ENCODE measurements at regions of chr2 and their contacts with region 1.

Region 1: DNA sequence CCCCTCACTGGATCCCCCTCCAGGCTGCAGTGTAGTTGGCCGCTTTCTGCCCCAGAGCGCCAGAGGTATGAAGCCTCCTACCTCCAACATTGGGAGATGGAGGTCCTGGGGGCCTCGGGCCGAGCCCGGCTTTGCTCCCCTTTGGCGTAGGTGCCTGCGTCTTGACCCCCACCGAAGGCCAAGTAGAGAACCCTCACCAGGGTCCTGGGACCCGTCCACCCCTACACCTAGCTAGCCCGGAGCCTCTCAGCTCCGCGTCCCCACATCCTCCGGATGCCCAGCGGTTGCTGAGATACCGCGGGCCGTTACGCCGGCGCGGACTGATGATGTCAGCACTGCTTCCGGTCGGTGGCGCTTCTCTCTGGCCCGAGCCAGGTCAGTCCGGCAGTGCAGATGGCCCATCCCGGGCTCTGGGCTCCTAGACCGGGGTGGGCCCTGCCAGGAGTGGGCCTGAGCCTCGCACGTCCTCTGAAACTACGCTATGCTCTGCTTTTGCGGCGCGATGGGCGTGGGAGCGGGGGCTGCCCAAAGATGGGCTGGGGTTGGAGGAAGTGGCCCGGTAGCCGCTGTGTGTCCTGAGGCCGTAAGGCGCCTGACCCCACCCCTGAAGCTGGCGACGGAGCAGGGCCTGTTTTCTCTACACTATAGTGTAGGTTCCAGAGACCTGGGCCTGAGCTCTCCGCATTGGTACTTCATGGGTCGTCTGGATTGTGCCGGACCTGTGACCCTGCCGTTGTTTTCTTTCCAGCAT is at the starts of genes GLB1L and STK16:
- DNase-seq: peak; percentile 85
- H3K4me3 ChIP-seq: peak within 1 kb of the TSS; percentile 67 to 98 (median 82)
- H3K27ac ChIP-seq: peak within 1 kb of the TSS; percentile 88
- H3K4me1 ChIP-seq: peaks cover 46% of the 10 kb centered on the region
- H3K27me3 ChIP-seq: no peaks in the 10 kb centered on the region
- CTCF ChIP-seq: no peak
- total RNA-seq, gene GLB1L: 5.5 to 21.8 TPM
- total RNA-seq, gene STK16: 26.9 to 29.8 TPM

Region 2: GRCh38 chr2:219125225-219125885 is 120.0 kb before region 1 on chr2:
- CTCF ChIA-PET with region 1: no interaction called
- dilution Hi-C with region 1: no loop called
- in situ Hi-C with region 1: no loop called
- intact Hi-C with region 1: no loop called
- DNase-seq: peak; percentile 90
- H3K4me3 ChIP-seq: no peak overlapping the region
- H3K27ac ChIP-seq: no peak overlapping the region
- H3K4me1 ChIP-seq: peaks cover 42% of the 10 kb centered on the region
- H3K27me3 ChIP-seq: no peaks in the 10 kb centered on the region
- CTCF ChIP-seq: no peak

Region 3: GRCh38 chr2:219218732-219219701 is 26.3 kb before region 1 on chr2 and contains the start of gene ABCB6:
- CTCF ChIA-PET with region 1: no interaction called
- dilution Hi-C with region 1: no loop called
- in situ Hi-C with region 1: no loop called
- intact Hi-C with region 1: loop called (anchors 1 kb)
- DNase-seq: peak; percentile 57
- H3K4me3 ChIP-seq: peak within 1 kb of the TSS; percentile 12 to 54 (median 48)
- H3K27ac ChIP-seq: peak within 1 kb of the TSS; percentile 18
- H3K4me1 ChIP-seq: peaks cover 21% of the 10 kb centered on the region
- H3K27me3 ChIP-seq: no peaks in the 10 kb centered on the region
- CTCF ChIP-seq: no peak
- total RNA-seq, gene ABCB6: 9.6 to 15.7 TPM

Region 4: DNA sequence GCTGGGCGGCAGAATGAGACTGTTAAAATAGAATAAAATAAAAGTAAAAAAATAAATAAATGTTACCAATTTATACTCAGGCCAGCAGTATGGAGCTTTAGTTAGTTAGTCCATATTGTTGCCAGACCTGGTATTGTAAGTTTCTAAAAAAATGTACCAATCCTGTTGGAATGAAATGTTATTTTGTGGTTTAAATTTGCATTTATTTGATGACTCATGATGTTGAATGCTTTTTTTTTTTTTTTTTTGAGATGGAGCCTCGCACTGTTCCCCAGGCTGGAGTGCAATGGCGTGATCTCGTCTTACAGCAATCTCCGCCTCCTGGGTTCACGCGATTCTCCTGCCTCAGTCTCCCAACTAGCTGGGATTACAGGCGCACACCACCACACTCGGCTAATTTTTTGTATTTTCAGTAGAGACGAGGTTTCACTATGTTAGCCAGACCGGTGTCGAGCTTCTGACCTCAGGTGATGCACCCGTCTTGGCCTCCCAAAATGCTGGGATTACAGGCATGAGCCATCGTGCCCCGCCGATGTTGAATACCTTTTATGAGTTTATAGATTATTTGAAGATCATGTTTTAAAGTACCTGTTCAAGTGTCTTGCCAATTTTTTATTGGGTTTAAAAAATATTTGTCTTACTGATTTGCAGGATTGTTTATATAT is 69.6 kb after region 1 on chr2:
- CTCF ChIA-PET with region 1: no interaction called
- dilution Hi-C with region 1: no loop called
- in situ Hi-C with region 1: no loop called
- intact Hi-C with region 1: no loop called
- DNase-seq: no peak
- H3K4me3 ChIP-seq: no peak overlapping the region
- H3K27ac ChIP-seq: no peak overlapping the region
- H3K4me1 ChIP-seq: no peaks in the 10 kb centered on the region
- H3K27me3 ChIP-seq: no peaks in the 10 kb centered on the region
- CTCF ChIP-seq: no peak

Region 5: DNA sequence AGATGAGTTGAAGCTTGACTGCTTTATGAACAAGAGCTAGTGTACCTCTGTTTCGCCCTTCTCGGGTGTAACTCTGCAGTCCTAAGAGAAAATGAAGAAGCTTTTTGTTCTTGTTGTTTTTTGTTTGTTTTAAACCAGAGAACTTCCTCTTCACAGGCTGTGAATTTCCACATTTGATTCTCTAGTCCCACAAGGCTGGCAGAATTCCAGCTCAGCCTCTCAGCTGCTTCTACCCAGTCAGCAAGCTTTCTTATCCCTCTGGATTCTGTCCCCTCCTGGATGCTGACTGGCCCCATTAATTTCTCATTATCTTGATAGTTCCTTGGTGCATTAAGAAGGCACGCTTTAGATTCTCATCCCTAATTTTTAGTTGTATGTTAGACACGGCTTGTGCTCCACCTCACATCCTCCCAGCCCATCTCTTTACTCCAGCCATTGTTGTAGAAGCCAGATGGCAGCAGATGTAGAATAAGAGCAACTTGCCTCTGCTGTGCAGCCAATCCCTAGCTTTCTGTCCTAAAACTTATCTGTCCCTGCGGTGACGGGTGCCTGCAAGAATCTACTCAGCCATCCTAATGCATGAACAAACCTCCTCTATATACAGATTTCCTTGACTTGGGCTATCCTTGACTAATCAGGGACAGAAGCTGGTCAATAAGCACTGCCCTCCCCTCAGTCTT is 99.6 kb after region 1 on chr2:
- CTCF ChIA-PET with region 1: no interaction called
- dilution Hi-C with region 1: loop called (anchors 5 kb)
- in situ Hi-C with region 1: no loop called
- intact Hi-C with region 1: no loop called
- DNase-seq: no peak
- H3K4me3 ChIP-seq: no peak overlapping the region
- H3K27ac ChIP-seq: no peak overlapping the region
- H3K4me1 ChIP-seq: no peaks in the 10 kb centered on the region
- H3K27me3 ChIP-seq: no peaks in the 10 kb centered on the region
- CTCF ChIP-seq: no peak

Region 6: GRCh38 chr2:219398721-219399333 is 153.5 kb after region 1 on chr2:
- CTCF ChIA-PET with region 1: no interaction called
- dilution Hi-C with region 1: no loop called
- in situ Hi-C with region 1: no loop called
- intact Hi-C with region 1: no loop called
- DNase-seq: no peak
- H3K4me3 ChIP-seq: no peak overlapping the region
- H3K27ac ChIP-seq: no peak overlapping the region
- H3K4me1 ChIP-seq: no peaks in the 10 kb centered on the region
- H3K27me3 ChIP-seq: no peaks in the 10 kb centered on the region
- CTCF ChIP-seq: no peak